ENCODE measurements at regions of chr16 and their contacts with region 1.

Region 1: GRCh38 chr16:69123910-69124309 is 8.5 kb downstream of the CHTF8 start:
- DNase-seq: peak; percentile 20
- H3K4me3 ChIP-seq: no peak overlapping the region
- H3K27ac ChIP-seq: no peak overlapping the region
- H3K4me1 ChIP-seq: peaks cover 7 to 68% (median 17%) of the 10 kb centered on the region in 6 donors
- H3K27me3 ChIP-seq: no peaks in the 10 kb centered on the region
- CTCF ChIP-seq: peak; percentile 50 to 78 (median 68)
- POLR2A ChIP-seq: no peak

Region 2: DNA sequence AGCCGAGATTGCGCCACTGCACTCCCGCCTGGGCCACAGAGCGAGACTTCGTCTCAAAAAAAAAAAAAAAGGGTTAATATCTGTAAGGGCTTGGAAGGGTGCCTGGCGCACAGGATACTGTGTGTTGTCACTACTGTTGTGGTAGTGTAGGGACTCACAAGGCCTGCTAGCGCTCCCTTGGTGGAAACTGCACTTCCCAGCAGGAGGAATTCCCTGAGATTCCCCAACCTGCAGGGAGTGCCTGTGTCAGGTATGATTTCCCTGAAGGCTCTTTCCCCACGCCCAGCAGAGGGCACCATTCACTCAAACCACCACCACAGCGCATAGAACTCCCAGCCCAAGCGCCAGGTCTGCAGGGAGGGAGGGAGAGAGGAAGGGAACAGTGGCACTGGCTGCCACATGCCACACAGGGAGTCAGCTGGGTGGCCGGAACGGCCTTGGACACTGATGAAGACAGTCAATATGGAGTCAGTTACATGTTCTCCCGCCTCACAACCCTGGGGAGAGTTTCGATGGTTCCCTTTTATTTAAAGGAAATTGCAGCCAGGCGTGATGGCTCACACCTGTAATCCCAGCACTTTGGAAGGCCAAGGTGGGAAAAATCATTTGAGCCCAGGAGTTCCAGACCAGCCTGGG is 419.6 kb before region 1 on chr16:
- intact Hi-C with region 1: loop called (anchors 10 kb)
- DNase-seq: peak; percentile 83
- H3K4me3 ChIP-seq: no peak overlapping the region
- H3K27ac ChIP-seq: no peak overlapping the region
- H3K4me1 ChIP-seq: peaks cover 0 to 48% (median 19%) of the 10 kb centered on the region in 6 donors
- H3K27me3 ChIP-seq: no peaks in the 10 kb centered on the region
- CTCF ChIP-seq: peak; percentile 8 to 73 (median 66)
- POLR2A ChIP-seq: no peak

Region 3: GRCh38 chr16:69049146-69049545 is 74.8 kb before region 1 on chr16:
- intact Hi-C with region 1: no loop called
- DNase-seq: no peak
- H3K4me3 ChIP-seq: no peak overlapping the region
- H3K27ac ChIP-seq: no peak overlapping the region
- H3K4me1 ChIP-seq: no peaks in the 10 kb centered on the region
- H3K27me3 ChIP-seq: no peaks in the 10 kb centered on the region
- CTCF ChIP-seq: no peak
- POLR2A ChIP-seq: no peak

Region 4: DNA sequence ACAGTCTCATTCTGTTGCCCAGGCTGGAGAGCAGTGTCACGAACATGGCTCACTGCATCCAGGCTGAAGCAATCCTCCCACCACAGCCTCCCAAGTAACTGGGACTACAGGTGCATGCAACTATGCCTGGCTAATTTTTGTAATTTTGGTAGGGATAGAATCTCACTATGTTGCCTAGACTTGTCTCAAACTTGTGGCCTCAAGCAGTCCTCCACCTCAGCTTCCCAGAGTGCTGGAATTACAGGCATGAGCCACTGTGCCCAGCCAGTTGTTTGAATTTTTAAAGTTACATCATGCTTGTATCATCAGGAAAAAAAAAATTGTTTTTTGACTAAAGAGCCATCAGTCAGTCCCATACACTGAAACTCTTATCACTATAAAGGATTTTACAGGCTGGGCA is 170.1 kb after region 1 on chr16:
- intact Hi-C with region 1: no loop called
- DNase-seq: no peak
- H3K4me3 ChIP-seq: no peak overlapping the region
- H3K27ac ChIP-seq: no peak overlapping the region
- H3K4me1 ChIP-seq: peaks cover 0 to 13% (median 3%) of the 10 kb centered on the region in 6 donors
- H3K27me3 ChIP-seq: no peaks in the 10 kb centered on the region
- CTCF ChIP-seq: no peak
- POLR2A ChIP-seq: no peak